PC-3 (cell line): ENCODE measurements at regions of chr1 and their contacts with region 1.

Region 1: DNA sequence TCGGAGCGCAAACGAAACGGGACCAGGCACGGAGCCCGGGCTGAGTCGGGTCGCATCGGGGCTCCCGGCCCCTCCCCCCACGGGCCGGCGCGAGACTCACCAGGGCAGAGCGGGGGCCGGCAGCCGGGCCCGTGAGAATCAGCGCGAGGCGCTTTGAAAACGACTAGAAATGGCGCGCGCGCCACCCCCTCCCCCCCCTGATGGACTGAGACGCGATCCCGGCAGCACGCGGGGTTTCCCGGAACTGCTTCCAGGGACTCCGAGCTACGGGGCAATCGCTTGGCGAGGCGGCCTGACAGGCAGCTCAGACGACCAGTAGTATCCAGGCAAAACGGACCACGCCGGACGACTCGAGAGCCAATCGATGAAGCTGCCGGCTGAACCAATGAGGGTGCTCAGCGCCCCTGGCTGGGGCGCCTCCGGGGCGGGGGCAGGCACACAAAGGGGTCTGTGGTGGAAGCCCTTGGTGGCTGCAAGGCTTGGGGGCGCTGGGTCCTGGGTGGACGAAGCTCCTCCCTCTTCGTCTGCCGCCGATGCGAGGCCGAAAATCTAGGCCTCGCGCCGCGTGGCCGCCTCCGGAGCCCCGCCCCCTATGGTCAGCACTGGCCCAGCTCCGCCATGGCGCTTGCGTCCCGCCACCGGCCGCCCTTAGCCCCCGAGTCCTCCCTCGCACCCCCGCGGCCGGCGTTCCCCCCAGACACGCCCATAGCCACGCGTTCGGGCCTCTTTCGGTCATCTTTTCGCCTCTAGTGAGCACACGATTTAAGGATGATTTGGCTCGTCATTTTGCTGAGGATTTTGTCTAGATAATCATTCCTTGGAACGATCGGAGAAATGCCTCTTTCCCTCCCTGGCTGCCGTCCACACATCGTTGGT is at the start of gene HNRNPR:
- DNase-seq: peak; percentile 99
- ATAC-seq: peak; percentile 95
- H3K4me3 ChIP-seq: peak within 1 kb of the TSS; percentile 76
- H3K27ac ChIP-seq: peak within 1 kb of the TSS; percentile 86
- H3K4me1 ChIP-seq: peaks cover 26% of the 10 kb centered on the region
- H3K27me3 ChIP-seq: no peaks in the 10 kb centered on the region
- CTCF ChIP-seq: no peak
- total RNA-seq, gene HNRNPR: 141 and 193 TPM in 2 replicates

Region 2: GRCh38 chr1:21439721-21440629 is 1904.4 kb before region 1 on chr1 and contains the start of gene NBPF3:
- CTCF ChIA-PET with region 1: no interaction called
- POLR2A ChIA-PET with region 1: interaction called, 25 read pairs
- intact Hi-C with region 1: no loop called
- DNase-seq: peak; percentile 93
- ATAC-seq: peak; percentile 96
- H3K4me3 ChIP-seq: peak within 1 kb of the TSS; percentile 75
- H3K27ac ChIP-seq: 0 out of 2 replicates have a peak within 1 kb of the TSS, but pooled peaks have one; percentile 36
- H3K4me1 ChIP-seq: peaks cover 14% of the 10 kb centered on the region
- H3K27me3 ChIP-seq: no peaks in the 10 kb centered on the region
- CTCF ChIP-seq: no peak
- total RNA-seq, gene NBPF3: 26.0 and 35.5 TPM in 2 replicates

Region 3: GRCh38 chr1:23029337-23029736 is 315.0 kb before region 1 on chr1:
- CTCF ChIA-PET with region 1: no interaction called
- POLR2A ChIA-PET with region 1: interaction called, 10 read pairs
- intact Hi-C with region 1: no loop called
- DNase-seq: no peak
- ATAC-seq: no peak
- H3K4me3 ChIP-seq: no peak overlapping the region
- H3K27ac ChIP-seq: no peak overlapping the region
- H3K4me1 ChIP-seq: 0 out of 2 replicates have a peak, but pooled peaks cover 6% of the 10 kb centered on the region
- H3K27me3 ChIP-seq: no peaks in the 10 kb centered on the region
- CTCF ChIP-seq: no peak

Region 4: DNA sequence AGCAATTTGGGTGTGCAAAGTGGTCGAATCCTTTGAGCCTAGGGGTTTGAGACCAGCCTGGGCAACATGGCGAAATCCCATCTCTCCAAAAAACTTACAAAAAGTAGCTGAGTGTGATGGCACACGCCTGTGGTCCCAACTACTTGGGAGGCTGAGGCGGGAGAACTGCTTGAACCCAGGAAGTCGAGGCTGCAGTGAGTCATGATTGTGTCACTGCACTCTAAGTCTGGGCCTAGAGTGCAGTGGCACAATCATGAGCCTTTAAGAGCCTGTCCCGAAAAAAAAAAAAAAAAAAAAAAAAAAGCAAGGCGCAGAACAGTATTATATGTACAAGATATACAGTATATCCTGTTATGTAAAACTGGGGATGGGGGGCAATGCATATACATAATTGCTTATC is 101.9 kb before region 1 on chr1:
- CTCF ChIA-PET with region 1: no interaction called
- POLR2A ChIA-PET with region 1: no interaction called
- intact Hi-C with region 1: no loop called
- DNase-seq: no peak
- ATAC-seq: no peak
- H3K4me3 ChIP-seq: no peak overlapping the region
- H3K27ac ChIP-seq: no peak overlapping the region
- H3K4me1 ChIP-seq: 0 out of 2 replicates have a peak, but pooled peaks cover 3% of the 10 kb centered on the region
- H3K27me3 ChIP-seq: no peaks in the 10 kb centered on the region
- CTCF ChIP-seq: no peak

Region 5: DNA sequence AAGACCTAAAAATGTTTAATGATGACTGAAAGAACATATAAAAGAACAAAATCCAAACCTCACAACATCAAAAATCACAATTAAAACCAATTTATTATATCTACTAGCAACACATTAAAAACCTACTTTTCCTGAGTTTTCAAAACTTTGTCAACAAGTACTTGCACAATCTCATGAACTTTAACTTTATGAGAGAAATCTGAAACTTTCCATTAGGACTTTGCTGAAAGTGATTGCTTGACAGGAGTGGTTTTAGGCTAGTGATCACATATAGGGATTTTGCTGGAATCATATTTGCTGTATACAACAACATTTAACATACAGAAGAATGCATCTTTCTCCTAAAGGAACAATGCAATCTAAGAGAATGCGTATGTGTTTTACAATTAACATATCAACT is 13.5 kb before region 1 on chr1:
- CTCF ChIA-PET with region 1: no interaction called
- POLR2A ChIA-PET with region 1: interaction called, 17 read pairs
- intact Hi-C with region 1: no loop called
- DNase-seq: no peak
- ATAC-seq: no peak
- H3K4me3 ChIP-seq: no peak overlapping the region
- H3K27ac ChIP-seq: no peak overlapping the region
- H3K4me1 ChIP-seq: peaks cover 18% of the 10 kb centered on the region
- H3K27me3 ChIP-seq: no peaks in the 10 kb centered on the region
- CTCF ChIP-seq: no peak

Region 6: GRCh38 chr1:23403735-23404486 is 59.6 kb after region 1 on chr1:
- CTCF ChIA-PET with region 1: interaction called, 14 read pairs
- POLR2A ChIA-PET with region 1: interaction called, 21 read pairs
- intact Hi-C with region 1: loop called (anchors 1 kb)
- DNase-seq: peak; percentile 98
- ATAC-seq: peak; percentile 93
- H3K4me3 ChIP-seq: peak overlapping the region; percentile 49
- H3K27ac ChIP-seq: peak overlapping the region; percentile 91
- H3K4me1 ChIP-seq: peaks cover 22% of the 10 kb centered on the region
- H3K27me3 ChIP-seq: no peaks in the 10 kb centered on the region
- CTCF ChIP-seq: peak; percentile 96

Region 7: GRCh38 chr1:23522244-23522982 is 178.1 kb after region 1 on chr1:
- CTCF ChIA-PET with region 1: no interaction called
- POLR2A ChIA-PET with region 1: no interaction called
- intact Hi-C with region 1: no loop called
- DNase-seq: peak; percentile 14
- ATAC-seq: no peak
- H3K4me3 ChIP-seq: no peak overlapping the region
- H3K27ac ChIP-seq: no peak overlapping the region
- H3K4me1 ChIP-seq: peaks cover 24% of the 10 kb centered on the region
- H3K27me3 ChIP-seq: no peaks in the 10 kb centered on the region
- CTCF ChIP-seq: no peak